Endothelial cell of umbilical vein (primary cell): ENCODE measurements at regions of chr9 and their contacts with region 1.

Region 1: DNA sequence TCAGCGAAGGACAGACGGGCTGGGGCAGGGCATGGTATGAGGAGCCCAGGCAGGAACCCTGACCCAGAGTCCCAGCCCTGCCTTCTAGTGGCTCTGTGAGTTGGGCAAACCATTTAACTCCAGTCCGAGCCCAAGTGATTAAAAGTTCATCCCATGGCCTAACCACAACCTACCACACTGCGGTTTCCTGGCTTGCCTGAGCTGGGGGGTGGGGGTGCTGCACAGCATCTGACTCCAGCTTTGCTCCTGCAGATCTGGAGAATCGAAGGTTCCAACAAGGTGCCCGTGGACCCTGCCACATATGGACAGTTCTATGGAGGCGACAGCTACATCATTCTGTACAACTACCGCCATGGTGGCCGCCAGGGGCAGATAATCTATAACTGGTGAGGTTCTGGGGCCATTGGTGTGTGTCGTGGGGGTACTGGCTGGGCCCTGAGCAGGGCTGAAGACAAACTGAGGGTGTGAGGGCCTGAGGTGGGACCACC is 49.0 kb downstream of the STOM start:
- DNase-seq: no peak
- H3K4me3 ChIP-seq: no peak overlapping the region
- H3K27ac ChIP-seq: peak overlapping the region; percentile 9
- H3K4me1 ChIP-seq: peaks cover 22% of the 10 kb centered on the region
- H3K27me3 ChIP-seq: no peaks in the 10 kb centered on the region
- CTCF ChIP-seq: no peak
- POLR2A ChIP-seq: no peak

Region 2: DNA sequence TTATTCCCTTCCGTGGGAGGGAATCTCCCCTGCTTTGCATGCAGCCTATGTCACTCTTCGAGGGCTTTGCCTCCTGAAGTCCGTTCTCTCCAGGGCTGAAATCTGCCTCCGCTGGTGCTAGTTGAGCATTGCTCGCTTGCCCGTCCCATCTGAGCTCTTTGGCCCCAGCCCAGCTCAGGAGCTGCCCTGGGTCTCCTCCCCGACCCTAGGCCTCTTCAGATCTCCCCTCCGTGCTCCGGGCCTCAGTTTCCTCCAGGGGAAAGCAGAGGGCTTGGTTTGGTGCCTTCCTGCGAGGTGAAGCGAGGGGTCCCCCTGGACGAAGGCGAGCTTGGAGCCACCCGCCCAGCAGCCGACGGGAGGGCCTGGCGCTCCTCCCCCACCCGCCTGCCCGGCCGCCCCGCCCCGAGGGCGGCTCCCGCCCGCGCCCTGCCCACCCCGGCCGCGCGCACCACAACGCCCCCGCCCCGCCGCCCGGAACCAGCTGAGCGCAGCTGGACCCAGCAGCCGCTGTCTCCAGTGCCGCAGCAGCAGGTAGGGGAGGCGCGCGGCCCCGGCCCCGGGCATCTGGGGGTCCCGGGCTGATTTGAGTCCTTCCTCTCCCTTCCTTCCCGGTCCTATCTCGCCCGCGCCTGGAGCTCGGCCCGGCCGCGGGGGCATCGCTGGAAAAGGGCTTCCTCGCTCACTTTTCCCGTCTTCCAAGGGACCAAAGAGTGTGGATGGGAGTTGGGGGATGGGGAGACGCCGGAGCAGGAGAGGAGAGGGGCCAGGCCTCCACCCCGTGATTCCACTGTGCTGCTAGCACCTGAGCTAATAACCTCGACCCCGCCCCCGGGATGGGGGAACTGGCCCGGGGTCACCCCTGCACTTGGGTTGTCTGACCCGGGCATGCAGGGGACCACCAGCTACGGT is 53.1 kb before region 1 on chr9 and contains the start of gene GSN:
- CTCF ChIA-PET with region 1: interaction called, 21 read pairs
- POLR2A ChIA-PET with region 1: no interaction called
- dilution Hi-C with region 1: no loop called
- intact Hi-C with region 1: no loop called
- DNase-seq: peak; percentile 68
- H3K4me3 ChIP-seq: peak within 1 kb of the TSS; percentile 51 to 86 (median 81)
- H3K27ac ChIP-seq: no peak within 1 kb of the TSS
- H3K4me1 ChIP-seq: peaks cover 16% of the 10 kb centered on the region
- H3K27me3 ChIP-seq: peaks cover 0 to 2% of the 10 kb centered on the region in 2 experiments
- CTCF ChIP-seq: no peak
- POLR2A ChIP-seq: no peak
- total RNA-seq, gene GSN: 130 and 176 TPM in 2 replicates

Region 3: DNA sequence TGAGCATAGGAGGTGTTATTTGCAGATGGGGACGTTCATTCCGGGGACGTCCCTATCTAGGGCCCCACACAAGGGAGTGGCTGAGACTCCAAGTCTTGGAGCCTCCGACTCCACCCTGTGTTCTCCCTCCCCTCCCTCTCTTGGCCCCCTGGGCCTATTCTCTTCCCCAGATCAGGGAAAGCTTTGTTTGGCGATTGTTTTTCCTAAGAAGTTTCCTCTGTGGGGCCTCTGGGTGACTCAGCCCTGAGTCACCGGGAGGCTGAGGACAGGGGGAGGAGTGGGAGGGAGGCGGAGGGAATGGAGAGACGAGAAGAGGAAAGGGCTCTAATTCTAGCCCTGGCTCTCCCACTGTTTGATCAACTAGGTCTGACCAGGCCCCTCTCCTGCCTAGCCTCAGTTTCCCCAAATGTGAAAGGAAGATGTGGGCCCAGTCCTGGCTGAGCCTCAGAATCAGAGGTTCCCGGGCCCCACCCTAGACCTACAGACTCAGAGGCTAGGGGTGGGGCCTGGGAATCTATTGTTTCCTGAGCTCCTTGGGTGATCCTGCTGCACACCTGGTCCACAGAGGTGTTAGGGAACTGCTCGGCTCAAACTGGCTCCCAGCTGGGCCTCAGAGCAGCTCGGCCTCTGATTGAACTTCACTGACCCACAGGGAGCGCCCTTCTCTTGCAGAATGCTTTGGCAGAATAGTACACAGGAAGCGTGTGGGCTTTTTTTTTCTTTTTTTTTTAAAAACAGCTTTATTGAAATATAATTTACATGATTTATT is 33.9 kb before region 1 on chr9:
- CTCF ChIA-PET with region 1: interaction called, 44 read pairs
- POLR2A ChIA-PET with region 1: no interaction called
- dilution Hi-C with region 1: no loop called
- intact Hi-C with region 1: loop called (anchors 1 kb)
- DNase-seq: peak; percentile 98
- H3K4me3 ChIP-seq: peak overlapping the region in 1 of 3 experiments; percentile 20
- H3K27ac ChIP-seq: peak overlapping the region; percentile 93
- H3K4me1 ChIP-seq: peaks cover 64% of the 10 kb centered on the region
- H3K27me3 ChIP-seq: no peaks in the 10 kb centered on the region
- CTCF ChIP-seq: peak; percentile 23 to 24
- POLR2A ChIP-seq: no peak

Region 4: DNA sequence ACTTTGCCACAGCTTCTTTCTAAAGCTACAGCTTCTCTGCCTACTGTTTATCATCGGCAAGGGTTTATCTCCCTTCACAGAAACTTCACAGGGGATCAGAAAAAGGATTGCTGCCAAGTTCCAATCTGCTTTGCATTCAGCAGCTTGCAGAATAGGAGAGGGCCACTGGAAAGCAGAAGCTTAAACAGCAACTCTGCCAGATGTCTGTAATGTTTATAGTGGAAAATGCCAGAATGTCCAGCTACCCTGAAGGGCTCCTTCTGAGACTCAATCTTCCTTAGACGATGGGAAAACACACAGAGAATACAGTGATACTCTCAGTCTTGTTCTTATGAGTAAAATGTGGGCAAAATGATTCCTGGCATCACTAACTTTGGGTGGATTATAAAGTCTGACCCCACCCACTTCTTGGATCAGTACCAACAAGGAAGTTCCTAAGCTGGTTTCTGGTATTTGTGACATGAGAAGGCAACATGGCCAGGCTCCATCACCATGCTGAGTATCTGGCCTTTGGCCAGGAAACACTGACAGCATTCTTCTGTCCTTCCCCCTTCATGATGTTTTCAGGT is 30.0 kb after region 1 on chr9:
- CTCF ChIA-PET with region 1: interaction called, 18 read pairs
- POLR2A ChIA-PET with region 1: no interaction called
- dilution Hi-C with region 1: no loop called
- intact Hi-C with region 1: loop called (anchors 1 kb)
- DNase-seq: peak; percentile 98
- H3K4me3 ChIP-seq: no peak overlapping the region
- H3K27ac ChIP-seq: peak overlapping the region; percentile 66
- H3K4me1 ChIP-seq: peaks cover 52% of the 10 kb centered on the region
- H3K27me3 ChIP-seq: no peaks in the 10 kb centered on the region
- CTCF ChIP-seq: no peak
- POLR2A ChIP-seq: no peak

Region 5: DNA sequence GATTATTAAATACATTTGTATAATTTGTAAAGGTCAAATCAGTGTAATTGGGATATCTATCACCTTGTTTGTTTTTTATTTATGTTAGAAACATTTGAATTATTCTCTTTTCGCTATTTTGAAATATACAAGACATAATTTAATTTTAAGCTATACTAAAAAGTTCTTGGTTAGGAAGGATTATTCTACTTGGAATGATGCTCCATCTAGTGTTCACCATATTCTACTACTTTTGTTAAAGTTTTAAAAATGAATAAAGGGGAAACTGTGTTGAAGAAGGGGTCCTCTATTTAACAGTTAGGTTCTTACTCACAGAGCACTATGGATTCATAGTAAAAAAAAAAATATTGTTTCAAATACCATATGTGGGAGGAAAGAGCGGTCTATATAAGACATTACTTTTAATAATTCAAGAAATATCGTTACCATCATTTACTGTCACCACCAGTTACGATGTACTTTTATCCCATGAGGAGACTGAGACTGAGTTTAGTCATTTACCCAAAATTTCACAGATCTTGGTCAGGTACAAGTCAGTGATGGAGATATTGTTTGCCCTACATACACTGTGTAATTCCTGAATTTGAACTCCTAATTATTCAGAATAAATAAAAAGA is 55.3 kb after region 1 on chr9:
- CTCF ChIA-PET with region 1: interaction called, 116 read pairs
- POLR2A ChIA-PET with region 1: no interaction called
- dilution Hi-C with region 1: no loop called
- intact Hi-C with region 1: loop called (anchors 1 kb)
- DNase-seq: peak; percentile 51
- H3K4me3 ChIP-seq: no peak overlapping the region
- H3K27ac ChIP-seq: no peak overlapping the region
- H3K4me1 ChIP-seq: no peaks in the 10 kb centered on the region
- H3K27me3 ChIP-seq: no peaks in the 10 kb centered on the region
- CTCF ChIP-seq: peak in 1 of 2 donors; percentile 17
- POLR2A ChIP-seq: no peak

Region 6: GRCh38 chr9:121393318-121393717 is 72.3 kb after region 1 on chr9:
- CTCF ChIA-PET with region 1: interaction called, 211 read pairs
- POLR2A ChIA-PET with region 1: no interaction called
- dilution Hi-C with region 1: no loop called
- intact Hi-C with region 1: loop called (anchors 1 kb)
- DNase-seq: peak; percentile 47
- H3K4me3 ChIP-seq: no peak overlapping the region
- H3K27ac ChIP-seq: no peak overlapping the region
- H3K4me1 ChIP-seq: peaks cover 28% of the 10 kb centered on the region
- H3K27me3 ChIP-seq: no peaks in the 10 kb centered on the region
- CTCF ChIP-seq: no peak
- POLR2A ChIP-seq: peak; percentile 37